Activated CD4-positive, alpha-beta memory T cell treated with anti-CD3 and anti-CD28 coated beads for 36 hours (primary cell): ENCODE measurements at regions of chr13 and their contacts with region 1.

Region 1: GRCh38 chr13:108218044-108218974 is at the start of gene ABHD13:
- DNase-seq: peak; percentile 93
- H3K4me3 Mint-ChIP-seq: peak within 1 kb of the TSS; percentile 89
- H3K27ac Mint-ChIP-seq: peak within 1 kb of the TSS; percentile 92
- H3K4me1 Mint-ChIP-seq: peaks cover 47% of the 10 kb centered on the region
- H3K27me3 Mint-ChIP-seq: no peaks in the 10 kb centered on the region
- total RNA-seq, gene ABHD13: 5.1 to 5.2 TPM

Region 2: GRCh38 chr13:108176685-108177274 is 41.5 kb before region 1 on chr13:
- CTCF ChIA-PET with region 1: no interaction called
- POLR2A ChIA-PET with region 1: no interaction called
- intact Hi-C with region 1: loop called (anchors 1 kb)
- DNase-seq: peak; percentile 67
- H3K4me3 Mint-ChIP-seq: no peak overlapping the region
- H3K27ac Mint-ChIP-seq: no peak overlapping the region
- H3K4me1 Mint-ChIP-seq: no peaks in the 10 kb centered on the region
- H3K27me3 Mint-ChIP-seq: no peaks in the 10 kb centered on the region

Region 3: DNA sequence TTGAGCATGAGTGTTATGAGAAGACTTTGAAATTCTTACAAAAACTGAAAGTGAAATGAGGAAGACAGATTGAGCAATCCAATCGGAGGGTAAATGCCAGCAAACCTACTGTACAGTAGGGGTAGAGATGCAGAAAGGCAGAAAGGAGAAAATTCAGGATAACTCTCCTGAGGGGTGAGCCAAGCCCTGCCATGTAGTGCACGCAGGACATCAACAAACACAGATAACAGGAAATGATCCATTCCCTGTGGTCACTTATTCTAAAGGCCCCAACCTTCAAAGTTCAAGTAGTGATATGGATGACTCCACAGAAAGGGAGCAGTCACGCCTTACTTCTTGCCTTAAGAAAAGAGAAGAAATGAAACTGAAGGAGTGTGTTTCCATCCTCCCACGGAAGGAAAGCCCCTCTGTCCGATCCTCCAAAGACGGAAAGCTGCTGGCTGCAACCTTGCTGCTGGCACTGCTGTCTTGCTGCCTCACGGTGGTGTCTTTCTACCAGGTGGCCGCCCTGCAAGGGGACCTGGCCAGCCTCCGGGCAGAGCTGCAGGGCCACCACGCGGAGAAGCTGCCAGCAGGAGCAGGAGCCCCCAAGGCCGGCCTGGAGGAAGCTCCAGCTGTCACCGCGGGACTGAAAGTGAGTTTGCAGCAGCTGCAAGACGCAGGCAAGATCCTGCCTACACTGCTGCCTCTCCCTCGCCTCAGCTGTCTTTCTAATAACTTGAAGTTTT is 51.5 kb after region 1 on chr13 and contains the start of gene TNFSF13B:
- CTCF ChIA-PET with region 1: no interaction called
- POLR2A ChIA-PET with region 1: interaction called, 3 read pairs
- intact Hi-C with region 1: loop called (anchors 1 kb)
- DNase-seq: peak; percentile 72
- H3K4me3 Mint-ChIP-seq: peak within 1 kb of the TSS; percentile 78
- H3K27ac Mint-ChIP-seq: peak within 1 kb of the TSS; percentile 85
- H3K4me1 Mint-ChIP-seq: peaks cover 50% of the 10 kb centered on the region
- H3K27me3 Mint-ChIP-seq: no peaks in the 10 kb centered on the region
- total RNA-seq, gene TNFSF13B: 3.1 to 4.3 TPM

Region 4: GRCh38 chr13:108495646-108496361 is 277.5 kb after region 1 on chr13:
- CTCF ChIA-PET with region 1: interaction called, 3 read pairs
- POLR2A ChIA-PET with region 1: no interaction called
- intact Hi-C with region 1: loop called (anchors 5 kb)
- DNase-seq: peak; percentile 36
- H3K4me3 Mint-ChIP-seq: peak overlapping the region; percentile 80
- H3K27ac Mint-ChIP-seq: no peak overlapping the region
- H3K4me1 Mint-ChIP-seq: peaks cover 20% of the 10 kb centered on the region
- H3K27me3 Mint-ChIP-seq: peaks cover 17% of the 10 kb centered on the region

Region 5: GRCh38 chr13:108915634-108916512 is 697.6 kb after region 1 on chr13:
- CTCF ChIA-PET with region 1: no interaction called
- POLR2A ChIA-PET with region 1: no interaction called
- intact Hi-C with region 1: loop called (anchors 5 kb)
- DNase-seq: peak; percentile 95
- H3K4me3 Mint-ChIP-seq: peak overlapping the region; percentile 68
- H3K27ac Mint-ChIP-seq: peak overlapping the region; percentile 78
- H3K4me1 Mint-ChIP-seq: peaks cover 20% of the 10 kb centered on the region
- H3K27me3 Mint-ChIP-seq: no peaks in the 10 kb centered on the region